ENCODE measurements at regions of chr9 and their contacts with region 1.

Region 1: GRCh38 chr9:130940693-130941576 is 1.9 kb upstream of the FIBCD1 start:
- DNase-seq: peak; percentile 74
- ATAC-seq: peak; percentile 89
- H3K4me3 Mint-ChIP-seq: peak overlapping the region; percentile 53
- H3K27ac Mint-ChIP-seq: no peak overlapping the region
- H3K4me1 Mint-ChIP-seq: peaks cover 16% of the 10 kb centered on the region
- H3K27me3 Mint-ChIP-seq: peaks cover 44% of the 10 kb centered on the region
- CTCF ChIP-seq: peak; percentile 48

Region 2: GRCh38 chr9:130461218-130461630 is 479.7 kb before region 1 on chr9:
- CTCF ChIA-PET with region 1: no interaction called
- POLR2A ChIA-PET with region 1: no interaction called
- intact Hi-C with region 1: loop called (anchors 2 kb)
- DNase-seq: peak; percentile 74
- ATAC-seq: peak; percentile 76
- H3K4me3 Mint-ChIP-seq: no peak overlapping the region
- H3K27ac Mint-ChIP-seq: no peak overlapping the region
- H3K4me1 Mint-ChIP-seq: no peaks in the 10 kb centered on the region
- H3K27me3 Mint-ChIP-seq: peaks cover 11% of the 10 kb centered on the region
- CTCF ChIP-seq: peak; percentile 77

Region 3: GRCh38 chr9:130866474-130866965 is 74.4 kb before region 1 on chr9:
- CTCF ChIA-PET with region 1: interaction called, 6 read pairs
- POLR2A ChIA-PET with region 1: no interaction called
- intact Hi-C with region 1: loop called (anchors 1 kb)
- DNase-seq: peak; percentile 33
- ATAC-seq: peak; percentile 56
- H3K4me3 Mint-ChIP-seq: no peak overlapping the region
- H3K27ac Mint-ChIP-seq: no peak overlapping the region
- H3K4me1 Mint-ChIP-seq: peaks cover 18% of the 10 kb centered on the region
- H3K27me3 Mint-ChIP-seq: no peaks in the 10 kb centered on the region
- CTCF ChIP-seq: no peak

Region 4: DNA sequence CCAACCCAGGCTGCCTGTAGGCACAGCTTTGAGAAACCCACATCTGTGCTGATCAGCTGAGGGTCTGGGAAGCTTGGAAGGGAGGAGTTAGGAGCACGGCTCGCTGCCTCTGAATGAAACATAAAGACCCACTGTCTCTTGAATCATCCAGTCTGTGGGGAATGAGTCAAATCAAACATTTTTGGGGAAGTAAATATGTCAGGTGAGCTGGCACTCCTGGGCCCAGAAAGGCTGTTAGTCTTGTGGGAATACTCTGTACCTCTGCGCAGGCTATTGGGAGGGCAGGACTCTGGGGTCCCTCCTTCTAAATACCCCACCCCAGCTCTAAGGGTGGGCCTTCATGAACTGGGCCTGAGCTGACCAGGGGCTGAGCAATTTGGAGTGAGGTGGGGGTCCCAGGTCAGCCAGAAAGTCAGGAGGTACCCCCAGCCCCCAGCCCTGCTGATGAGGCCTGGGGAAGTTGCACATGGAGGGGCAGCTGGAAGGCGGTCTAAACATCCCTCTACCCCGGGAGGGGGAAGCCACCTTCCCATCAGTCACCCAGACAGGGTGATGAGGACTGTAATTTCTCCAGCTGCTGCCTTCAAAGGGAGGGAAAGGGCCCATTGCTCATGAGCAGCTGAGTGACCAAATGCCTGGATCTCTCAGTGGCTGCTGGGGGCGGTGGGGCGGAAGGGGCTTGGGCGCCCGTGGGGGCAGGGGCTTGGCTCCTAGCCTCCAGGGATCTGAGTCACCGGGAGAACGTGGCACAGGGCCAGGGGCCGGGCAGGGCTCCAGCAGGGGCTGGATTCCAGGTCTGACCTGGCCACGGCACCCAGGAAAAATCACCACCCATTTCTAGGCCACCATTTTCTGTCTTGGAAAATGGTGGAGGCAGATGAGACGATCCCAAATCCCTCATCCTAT is 12.7 kb before region 1 on chr9:
- CTCF ChIA-PET with region 1: no interaction called
- POLR2A ChIA-PET with region 1: no interaction called
- intact Hi-C with region 1: no loop called
- DNase-seq: no peak
- ATAC-seq: peak; percentile 72
- H3K4me3 Mint-ChIP-seq: no peak overlapping the region
- H3K27ac Mint-ChIP-seq: peak overlapping the region; percentile 69
- H3K4me1 Mint-ChIP-seq: peaks cover 26% of the 10 kb centered on the region
- H3K27me3 Mint-ChIP-seq: peaks cover 34% of the 10 kb centered on the region
- CTCF ChIP-seq: no peak